Head of caudate nucleus (tissue), 42 donors: ENCODE measurements at regions of chr11 and their contacts with region 1.

Region 1: GRCh38 chr11:112665291-112665690 is 295.9 kb upstream of the NCAM1 start:
- DNase-seq: peak in 3 of 42 donors; percentile 21 to 36 (median 35)

Region 2: GRCh38 chr11:112345708-112346107 is 319.6 kb before region 1 on chr11:
- intact Hi-C with region 1: no loop called
- DNase-seq: no peak

Region 3: DNA sequence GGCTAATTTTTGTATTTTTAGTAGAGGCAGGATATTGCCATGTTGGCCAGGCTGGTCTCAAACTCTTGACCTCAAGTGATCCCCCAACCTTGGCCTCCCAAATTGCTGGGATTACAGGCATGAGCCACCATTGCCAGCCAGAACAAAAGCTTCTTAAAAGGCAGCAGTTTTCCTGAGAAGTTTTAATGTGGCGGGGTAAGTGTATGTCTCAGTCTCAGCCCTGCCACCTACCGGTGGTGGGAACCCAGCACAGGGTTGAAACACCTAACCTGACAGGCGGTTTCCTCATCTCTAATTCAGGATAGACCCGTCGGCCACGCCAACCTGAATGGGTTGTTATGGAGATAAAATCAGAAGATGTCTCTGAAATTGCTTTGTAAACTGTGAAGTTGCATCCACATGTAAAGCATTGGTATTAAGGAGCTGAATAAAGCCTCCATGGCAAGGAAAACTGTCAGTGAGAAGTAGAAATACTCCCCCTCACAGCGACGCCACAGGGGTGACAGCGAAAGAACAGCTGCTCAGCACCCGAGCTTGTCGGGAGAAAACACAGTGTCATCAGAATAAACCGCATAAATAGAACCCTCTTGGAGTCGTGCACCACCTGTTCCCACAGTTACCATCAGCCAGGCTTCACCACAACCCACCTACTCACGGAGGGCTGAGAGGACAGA is 130.0 kb after region 1 on chr11:
- intact Hi-C with region 1: loop called (anchors 10 kb)
- DNase-seq: peak in 33 of 42 donors; percentile 24 to 82 (median 54)